ENCODE measurements at regions of chr2 and their contacts with region 1.

Region 1: DNA sequence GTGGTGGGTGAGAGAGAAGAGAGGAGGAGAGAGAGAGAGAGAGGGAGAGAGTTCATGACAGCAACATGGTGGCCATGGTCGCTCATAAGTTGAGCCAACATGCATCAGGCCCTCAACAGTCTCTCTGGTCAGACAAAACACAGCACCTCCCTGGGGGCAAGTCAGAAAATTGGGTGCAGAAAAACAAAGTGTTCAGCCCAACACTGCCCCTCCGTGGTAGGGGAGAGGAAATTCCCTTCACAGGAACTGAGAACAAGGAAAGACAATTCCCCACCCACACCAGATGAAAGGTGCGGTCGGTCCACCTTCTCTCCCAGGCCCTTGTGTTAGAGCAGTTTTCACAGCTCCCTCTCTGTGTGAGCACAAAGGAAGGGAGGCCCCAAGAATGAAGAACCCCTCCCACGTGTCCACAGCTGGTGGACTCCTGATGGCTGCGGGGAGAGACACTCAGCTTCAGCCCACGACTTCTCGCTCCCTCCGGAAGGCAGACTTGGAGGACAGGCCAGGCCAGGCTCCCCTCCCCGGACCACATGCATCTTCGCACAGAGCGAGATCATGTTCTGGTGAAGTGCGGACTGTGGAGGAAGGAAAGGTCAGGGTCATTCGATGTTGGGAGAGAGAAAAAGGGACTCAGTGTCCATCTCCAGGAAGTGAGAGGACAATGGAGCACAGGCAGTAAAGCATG is 181.7 kb downstream of the ANAPC1 start:
- DNase-seq: peak; percentile 54
- ATAC-seq: no peak
- H3K4me3 ChIP-seq: no peak overlapping the region
- H3K4me3 Mint-ChIP-seq: no peak overlapping the region
- H3K27ac ChIP-seq: no peak overlapping the region
- H3K27ac Mint-ChIP-seq: no peak overlapping the region
- H3K4me1 ChIP-seq: peaks cover 0 to 17% of the 10 kb centered on the region in 2 donors
- H3K4me1 Mint-ChIP-seq: peaks cover 29% of the 10 kb centered on the region
- H3K27me3 ChIP-seq: no peaks in the 10 kb centered on the region
- H3K27me3 Mint-ChIP-seq: peaks cover 5% of the 10 kb centered on the region
- CTCF ChIP-seq: peak; percentile 63

Region 2: DNA sequence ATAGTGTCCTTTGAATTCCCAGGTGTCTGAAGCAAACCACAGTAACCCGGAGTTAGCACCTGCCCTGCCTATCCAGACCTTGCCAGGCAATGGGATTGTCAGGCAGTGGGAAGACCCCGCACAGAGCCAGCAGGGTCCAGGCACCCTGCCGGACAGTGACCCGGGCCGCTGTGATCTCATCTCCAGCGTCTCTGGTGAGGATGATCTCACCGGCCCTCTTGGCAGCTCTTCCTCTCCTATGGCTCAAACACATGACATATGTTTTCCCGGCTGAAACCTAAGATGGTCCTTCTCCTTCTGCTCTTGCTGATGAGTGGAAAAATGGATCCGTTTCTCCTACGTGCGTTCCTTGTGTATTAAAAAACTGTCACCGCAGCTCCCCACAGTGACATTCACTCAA is 894.7 kb before region 1 on chr2:
- CTCF ChIA-PET with region 1: interaction called, 4 read pairs
- POLR2A ChIA-PET with region 1: interaction called, 4 read pairs
- intact Hi-C with region 1: loop called (anchors 1 kb)
- DNase-seq: no peak
- ATAC-seq: no peak
- H3K4me3 ChIP-seq: no peak overlapping the region
- H3K4me3 Mint-ChIP-seq: no peak overlapping the region
- H3K27ac ChIP-seq: no peak overlapping the region
- H3K27ac Mint-ChIP-seq: no peak overlapping the region
- H3K4me1 ChIP-seq: peaks cover 23 to 24% of the 10 kb centered on the region in 2 donors
- H3K4me1 Mint-ChIP-seq: peaks cover 33% of the 10 kb centered on the region
- H3K27me3 ChIP-seq: peaks cover 0 to 23% (median 8%) of the 10 kb centered on the region in 4 experiments
- H3K27me3 Mint-ChIP-seq: peaks cover 48% of the 10 kb centered on the region
- CTCF ChIP-seq: no peak

Measured in B cell (primary cell).